GM12878 (cell line): ENCODE measurements at regions of chr4 and their contacts with region 1.

Region 1: DNA sequence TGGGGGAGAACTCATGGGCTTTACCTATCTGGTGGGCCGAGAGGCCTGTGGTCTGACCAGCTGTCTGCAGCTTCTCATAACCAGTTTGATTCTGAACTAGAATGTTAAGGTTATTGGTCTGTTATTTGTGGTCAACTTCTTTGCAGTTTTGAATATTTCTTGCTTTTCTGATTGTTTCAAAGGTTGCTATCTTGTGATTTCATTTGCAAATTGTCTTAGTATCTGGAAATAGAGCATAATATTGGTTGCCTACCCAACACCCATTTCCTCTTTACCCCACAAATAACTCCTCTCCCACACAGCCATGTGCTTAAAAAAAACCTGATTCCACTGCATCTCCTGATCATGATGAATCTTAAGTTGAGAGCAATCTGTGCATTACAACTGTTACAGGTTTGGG is 39.1 kb upstream of the BMP2K start:
- DNase-seq: peak; percentile 26
- ATAC-seq: peak; percentile 69
- H3K4me3 ChIP-seq: no peak overlapping the region
- H3K27ac ChIP-seq: no peak overlapping the region
- H3K4me1 ChIP-seq: peaks cover 33% of the 10 kb centered on the region
- H3K27me3 ChIP-seq: no peaks in the 10 kb centered on the region
- CTCF ChIP-seq: no peak
- EP300 ChIP-seq: peak in 1 of 2 experiments; percentile 64; a peak in 2 of 4 replicates
- POLR2A ChIP-seq: no peak
- RAD21 ChIP-seq: no peak

Region 2: GRCh38 chr4:78710536-78710935 is 26.5 kb before region 1 on chr4:
- CTCF ChIA-PET with region 1: interaction called, 3 read pairs
- POLR2A ChIA-PET with region 1: no interaction called
- RAD21 ChIA-PET with region 1: interaction called, 8 read pairs
- SMC1A ChIA-PET with region 1: interaction called, 10 read pairs
- in situ Hi-C with region 1: no loop called
- intact Hi-C with region 1: no loop called
- DNase-seq: no peak
- ATAC-seq: no peak
- H3K4me3 ChIP-seq: no peak overlapping the region
- H3K27ac ChIP-seq: no peak overlapping the region
- H3K4me1 ChIP-seq: peaks cover 23% of the 10 kb centered on the region
- H3K27me3 ChIP-seq: no peaks in the 10 kb centered on the region
- CTCF ChIP-seq: no peak
- EP300 ChIP-seq: no peak
- POLR2A ChIP-seq: no peak
- RAD21 ChIP-seq: no peak

Region 3: GRCh38 chr4:78726546-78726945 is 10.5 kb before region 1 on chr4:
- CTCF ChIA-PET with region 1: interaction called, 5 read pairs
- POLR2A ChIA-PET with region 1: interaction called, 4 read pairs
- RAD21 ChIA-PET with region 1: interaction called, 3 read pairs
- SMC1A ChIA-PET with region 1: interaction called, 11 read pairs
- in situ Hi-C with region 1: no loop called
- intact Hi-C with region 1: no loop called
- DNase-seq: no peak
- ATAC-seq: no peak
- H3K4me3 ChIP-seq: no peak overlapping the region
- H3K27ac ChIP-seq: no peak overlapping the region
- H3K4me1 ChIP-seq: no peaks in the 10 kb centered on the region
- H3K27me3 ChIP-seq: no peaks in the 10 kb centered on the region
- CTCF ChIP-seq: no peak
- EP300 ChIP-seq: no peak
- POLR2A ChIP-seq: no peak
- RAD21 ChIP-seq: no peak

Region 4: DNA sequence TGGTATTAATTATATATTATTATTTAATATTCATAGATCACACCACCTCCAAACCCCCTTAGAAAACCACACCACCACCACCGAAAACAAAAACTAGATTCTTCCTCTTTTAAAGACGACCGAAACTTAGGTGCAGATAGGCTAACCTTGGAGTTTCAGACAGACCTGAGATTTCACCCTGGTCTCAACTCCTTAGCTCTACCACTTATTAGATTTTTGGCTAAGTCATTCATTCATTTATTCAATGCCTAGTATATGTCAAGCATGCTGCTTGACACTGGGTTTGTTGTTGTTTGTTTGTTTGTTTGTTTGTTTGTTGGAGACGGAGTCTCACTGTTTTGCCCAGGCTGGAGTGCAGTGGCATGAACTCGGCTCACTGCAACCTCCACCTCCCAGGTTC is 29.6 kb after region 1 on chr4:
- CTCF ChIA-PET with region 1: interaction called, 3 read pairs
- POLR2A ChIA-PET with region 1: no interaction called
- RAD21 ChIA-PET with region 1: interaction called, 7 read pairs
- SMC1A ChIA-PET with region 1: interaction called, 12 read pairs
- in situ Hi-C with region 1: no loop called
- intact Hi-C with region 1: no loop called
- DNase-seq: no peak
- ATAC-seq: peak; percentile 92
- H3K4me3 ChIP-seq: peak overlapping the region; percentile 14; the same call in 1 of the 2 replicates
- H3K27ac ChIP-seq: no peak overlapping the region
- H3K4me1 ChIP-seq: peaks cover 27% of the 10 kb centered on the region
- H3K27me3 ChIP-seq: no peaks in the 10 kb centered on the region
- CTCF ChIP-seq: no peak
- EP300 ChIP-seq: no peak
- POLR2A ChIP-seq: no peak
- RAD21 ChIP-seq: no peak